Mucosa of descending colon (tissue), 3 donors: ENCODE measurements at regions of chr16 and their contacts with region 1.

Region 1: DNA sequence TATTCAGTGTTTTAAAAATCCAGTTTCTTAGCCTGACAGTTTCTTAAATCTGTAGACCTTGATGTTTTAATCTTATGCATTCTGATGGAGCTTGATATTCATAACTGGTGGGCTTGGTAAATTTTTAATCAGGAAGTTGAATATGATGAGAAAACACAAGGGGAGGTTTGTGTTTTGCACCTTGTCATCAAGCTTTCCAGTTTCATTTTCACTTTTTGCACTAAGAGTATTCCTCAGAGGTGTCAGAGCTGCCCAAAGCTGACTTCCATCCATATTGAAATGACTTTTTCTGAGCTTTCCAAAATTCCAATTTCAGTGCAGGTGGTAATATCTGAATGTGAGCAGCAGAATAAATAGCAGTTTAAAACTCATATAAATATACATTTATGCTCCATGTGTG is 555.0 kb upstream of the RBFOX1 start:
- DNase-seq: no peak
- ATAC-seq: no peak
- H3K4me3 ChIP-seq: no peak overlapping the region
- H3K4me1 ChIP-seq: no peaks in the 10 kb centered on the region
- CTCF ChIP-seq: no peak

Region 2: DNA sequence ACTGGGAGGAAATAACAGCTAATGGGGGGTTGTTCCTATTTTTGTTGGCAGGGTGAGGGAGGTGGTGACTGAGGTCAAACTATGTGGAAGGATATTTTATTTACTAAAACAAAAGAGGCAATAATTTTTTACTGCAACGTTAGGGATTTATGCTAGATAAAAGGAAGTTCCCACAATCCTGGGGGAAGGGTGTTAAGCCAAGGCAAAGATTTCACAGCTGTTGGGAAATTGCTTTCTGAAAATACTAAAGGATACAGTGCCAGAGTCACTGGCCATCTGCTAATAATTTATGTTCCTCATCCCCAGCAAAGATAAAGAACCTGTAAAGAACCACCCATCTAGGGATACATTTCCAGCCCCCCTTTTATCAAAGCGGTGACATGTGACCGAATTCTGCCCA is 201.0 kb before region 1 on chr16:
- intact Hi-C with region 1: no loop called
- DNase-seq: no peak
- ATAC-seq: no peak
- H3K4me3 ChIP-seq: no peak overlapping the region
- H3K4me1 ChIP-seq: no peaks in the 10 kb centered on the region
- CTCF ChIP-seq: no peak

Region 3: GRCh38 chr16:7090628-7091115 is 313.0 kb after region 1 on chr16:
- intact Hi-C with region 1: no loop called
- DNase-seq: no peak
- ATAC-seq: no peak
- H3K4me3 ChIP-seq: no peak overlapping the region
- H3K4me1 ChIP-seq: no peaks in the 10 kb centered on the region
- CTCF ChIP-seq: no peak

Region 4: GRCh38 chr16:7731141-7731540 is 953.5 kb after region 1 on chr16:
- intact Hi-C with region 1: loop called in 1 of 2 experiments (anchors 10 kb)
- DNase-seq: peak in 1 of 3 donors; percentile 7
- ATAC-seq: no peak
- H3K4me3 ChIP-seq: no peak overlapping the region
- H3K4me1 ChIP-seq: no peaks in the 10 kb centered on the region
- CTCF ChIP-seq: no peak